GM12878 (cell line): ENCODE measurements at regions of chr5 and their contacts with region 1.

Region 1: DNA sequence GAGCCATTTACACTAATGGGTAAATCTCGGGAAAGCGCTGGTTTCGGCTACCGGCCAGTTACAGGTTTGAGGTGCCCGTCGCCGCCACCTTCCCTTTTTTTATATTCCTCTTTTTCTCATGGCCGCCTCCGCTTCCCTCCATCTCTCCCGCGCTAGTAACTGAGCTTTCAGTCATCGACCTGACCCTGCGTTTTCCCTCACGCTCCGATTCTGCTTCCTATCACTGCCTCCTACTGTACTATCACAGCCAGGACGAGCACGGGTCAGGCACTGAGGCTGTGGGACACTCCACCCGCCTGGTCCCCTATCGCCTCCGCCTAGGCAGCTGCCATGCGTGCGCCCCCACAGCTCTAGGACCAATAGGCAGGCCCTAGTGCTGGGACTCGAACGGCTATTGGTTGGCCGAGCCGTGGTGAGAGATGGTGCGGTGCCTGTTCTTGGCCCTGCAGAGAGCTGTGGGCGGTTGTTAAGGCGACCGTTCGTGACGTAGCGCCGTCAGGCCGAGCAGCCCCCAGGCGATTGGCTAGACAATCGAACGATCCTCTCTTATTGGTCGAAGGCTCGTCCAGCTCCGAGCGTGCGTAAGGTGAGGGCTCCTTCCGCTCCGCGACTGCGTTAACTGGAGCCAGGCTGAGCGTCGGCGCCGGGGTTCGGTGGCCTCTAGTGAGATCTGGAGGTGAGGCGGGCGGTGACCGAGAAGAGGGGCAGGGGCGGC is at the start of gene HMGCR:
- DNase-seq: peak; percentile 98
- ATAC-seq: peak; percentile 97
- H3K4me3 ChIP-seq: peak within 1 kb of the TSS; percentile 91
- H3K27ac ChIP-seq: peak within 1 kb of the TSS; percentile 96
- H3K4me1 ChIP-seq: peaks cover 6% of the 10 kb centered on the region; the same call in 1 of the 2 replicates
- H3K27me3 ChIP-seq: no peaks in the 10 kb centered on the region
- CTCF ChIP-seq: peak; percentile 30 to 42 (median 32); a peak in 4 of 6 replicates
- EP300 ChIP-seq: peak in 1 of 2 experiments; percentile 51; a peak in 3 of 4 replicates
- POLR2A ChIP-seq: peak; percentile 98
- RAD21 ChIP-seq: no peak
- polyA plus RNA-seq, gene HMGCR: 30.8 to 39.0 TPM

Region 2: DNA sequence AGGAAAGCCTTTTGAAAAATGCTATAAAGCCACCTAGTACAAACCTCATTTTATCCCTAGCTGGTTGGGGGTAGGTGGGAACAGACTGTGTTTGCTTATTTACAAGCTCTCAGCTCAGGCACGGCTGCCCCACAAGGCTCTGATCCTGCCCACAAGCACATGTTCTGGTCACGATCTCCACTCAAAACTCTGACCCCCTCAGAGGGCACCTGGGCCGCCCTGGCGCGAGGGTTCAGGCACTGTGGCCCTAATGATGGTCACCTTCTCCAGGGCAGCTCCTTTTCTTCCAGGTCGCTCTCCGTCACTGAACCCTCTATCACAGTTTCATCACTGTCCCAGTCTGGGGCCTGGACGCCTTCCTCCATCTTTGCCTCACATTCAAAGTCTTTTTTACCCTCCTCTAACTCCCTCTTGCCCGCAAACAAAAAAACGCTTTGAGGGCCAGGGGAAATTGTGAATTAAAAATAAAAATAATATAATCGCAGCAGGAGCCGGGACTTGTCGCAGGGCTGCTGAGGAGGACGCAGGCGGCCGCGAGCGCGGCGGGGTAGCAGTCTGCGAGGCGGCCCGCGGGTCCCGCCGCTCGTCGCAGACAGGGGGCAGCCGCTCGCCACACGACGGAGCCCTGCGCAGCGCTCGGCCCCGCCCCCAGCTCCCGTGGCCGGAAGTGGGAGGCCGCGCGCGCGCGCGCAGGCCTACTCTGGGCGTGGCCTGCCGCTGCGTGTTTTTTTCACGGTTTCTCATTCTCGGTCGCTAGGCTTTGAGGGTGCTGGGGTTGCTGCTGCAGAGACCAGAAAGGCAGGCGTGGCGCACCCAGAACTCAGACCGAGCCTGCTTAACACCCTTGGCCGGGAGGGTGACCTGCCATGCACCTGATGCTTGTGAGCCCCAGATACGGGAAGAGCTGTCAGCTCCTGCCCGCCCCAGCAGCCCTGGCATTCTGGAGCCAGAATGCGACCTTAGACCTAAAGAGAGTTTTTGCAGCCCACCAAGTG is 100.2 kb before region 1 on chr5 and contains the start of gene ANKRD31:
- CTCF ChIA-PET with region 1: interaction called, 17 read pairs
- POLR2A ChIA-PET with region 1: interaction called, 16 read pairs
- RAD21 ChIA-PET with region 1: interaction called, 28 read pairs
- SMC1A ChIA-PET with region 1: interaction called, 24 read pairs
- in situ Hi-C with region 1: no loop called
- intact Hi-C with region 1: loop called (anchors 1 kb)
- DNase-seq: peak; percentile 42
- ATAC-seq: peak; percentile 100
- H3K4me3 ChIP-seq: peak within 1 kb of the TSS; percentile 63
- H3K27ac ChIP-seq: no peak within 1 kb of the TSS
- H3K4me1 ChIP-seq: peaks cover 3% of the 10 kb centered on the region; the same call in 1 of the 2 replicates
- H3K27me3 ChIP-seq: no peaks in the 10 kb centered on the region
- CTCF ChIP-seq: peak; percentile 60 to 85 (median 72); a peak in 5 of 6 replicates
- EP300 ChIP-seq: peak in 1 of 2 experiments; percentile 16; a peak in 1 of 4 replicates
- POLR2A ChIP-seq: peak; percentile 71
- RAD21 ChIP-seq: peak; percentile 64
- polyA plus RNA-seq, gene ANKRD31: 0.02 TPM in 1 of 2 experiments, not detected in the other

Region 3: GRCh38 chr5:75351139-75351926 is 14.6 kb after region 1 on chr5:
- CTCF ChIA-PET with region 1: interaction called, 13 read pairs
- POLR2A ChIA-PET with region 1: interaction called, 19 read pairs
- RAD21 ChIA-PET with region 1: interaction called, 12 read pairs
- SMC1A ChIA-PET with region 1: interaction called, 15 read pairs
- in situ Hi-C with region 1: no loop called
- intact Hi-C with region 1: no loop called
- DNase-seq: no peak
- ATAC-seq: peak; percentile 76
- H3K4me3 ChIP-seq: no peak overlapping the region
- H3K27ac ChIP-seq: no peak overlapping the region
- H3K4me1 ChIP-seq: no peaks in the 10 kb centered on the region; the same call in 1 of the 2 replicates
- H3K27me3 ChIP-seq: no peaks in the 10 kb centered on the region
- CTCF ChIP-seq: no peak
- EP300 ChIP-seq: no peak
- POLR2A ChIP-seq: no peak
- RAD21 ChIP-seq: no peak

Region 4: DNA sequence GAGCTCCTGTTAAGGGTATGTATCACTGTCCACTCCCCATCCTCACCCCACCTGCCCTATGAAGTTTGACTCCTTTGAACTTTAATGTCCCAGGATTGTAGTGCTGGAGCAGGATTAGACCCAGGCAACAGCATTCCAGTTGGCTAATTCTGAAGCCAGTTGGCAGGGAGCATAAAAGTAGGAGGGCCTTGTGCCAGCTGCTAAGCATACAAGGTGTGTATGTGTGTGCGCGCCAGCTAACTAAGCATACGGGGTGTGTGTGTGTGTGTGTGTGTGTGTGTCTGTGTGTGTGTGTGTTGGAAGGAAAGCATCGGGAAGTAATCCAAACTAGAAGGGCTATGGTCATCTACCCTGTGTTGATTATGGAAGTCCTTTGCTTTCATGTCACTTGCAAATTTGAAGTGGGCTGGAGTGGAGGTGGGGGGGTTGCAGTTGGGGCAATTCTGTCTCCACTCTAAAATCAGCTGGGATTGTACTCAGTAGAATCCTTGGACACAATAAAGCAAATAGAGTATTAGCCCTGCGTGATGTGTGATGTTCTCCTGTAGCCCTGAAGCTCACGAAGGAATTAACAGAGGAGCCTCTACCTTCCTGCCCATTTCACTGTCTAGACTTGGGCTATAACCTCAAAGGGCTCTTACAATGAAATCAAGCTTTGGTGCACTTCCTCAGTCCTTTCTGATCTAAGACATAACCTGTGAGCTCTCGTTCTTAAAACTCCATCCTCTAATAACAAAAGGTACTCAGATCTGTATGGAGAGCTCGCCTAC is 27.1 kb after region 1 on chr5:
- CTCF ChIA-PET with region 1: interaction called, 6 read pairs
- POLR2A ChIA-PET with region 1: interaction called, 6 read pairs
- RAD21 ChIA-PET with region 1: no interaction called
- SMC1A ChIA-PET with region 1: interaction called, 18 read pairs
- in situ Hi-C with region 1: no loop called
- intact Hi-C with region 1: no loop called
- DNase-seq: no peak
- ATAC-seq: no peak
- H3K4me3 ChIP-seq: no peak overlapping the region
- H3K27ac ChIP-seq: no peak overlapping the region
- H3K4me1 ChIP-seq: peaks cover 14% of the 10 kb centered on the region
- H3K27me3 ChIP-seq: no peaks in the 10 kb centered on the region
- CTCF ChIP-seq: no peak
- EP300 ChIP-seq: no peak
- POLR2A ChIP-seq: 0 out of 2 replicates have a peak, but pooled peaks have one; percentile 29
- RAD21 ChIP-seq: no peak

Region 5: GRCh38 chr5:75574791-75575190 is 238.0 kb after region 1 on chr5:
- CTCF ChIA-PET with region 1: no interaction called
- POLR2A ChIA-PET with region 1: interaction called, 6 read pairs
- RAD21 ChIA-PET with region 1: interaction called, 8 read pairs
- SMC1A ChIA-PET with region 1: interaction called, 6 read pairs
- in situ Hi-C with region 1: no loop called
- intact Hi-C with region 1: loop called (anchors 5 kb)
- DNase-seq: no peak
- ATAC-seq: no peak; the same call in 2 of the 3 replicates
- H3K4me3 ChIP-seq: peak overlapping the region; percentile 40; the same call in 1 of the 2 replicates
- H3K27ac ChIP-seq: peak overlapping the region; percentile 84
- H3K4me1 ChIP-seq: peaks cover 15% of the 10 kb centered on the region
- H3K27me3 ChIP-seq: no peaks in the 10 kb centered on the region
- CTCF ChIP-seq: no peak
- EP300 ChIP-seq: no peak
- POLR2A ChIP-seq: no peak
- RAD21 ChIP-seq: no peak